ENCODE measurements at regions of chr9 and their contacts with region 1.

Region 1: DNA sequence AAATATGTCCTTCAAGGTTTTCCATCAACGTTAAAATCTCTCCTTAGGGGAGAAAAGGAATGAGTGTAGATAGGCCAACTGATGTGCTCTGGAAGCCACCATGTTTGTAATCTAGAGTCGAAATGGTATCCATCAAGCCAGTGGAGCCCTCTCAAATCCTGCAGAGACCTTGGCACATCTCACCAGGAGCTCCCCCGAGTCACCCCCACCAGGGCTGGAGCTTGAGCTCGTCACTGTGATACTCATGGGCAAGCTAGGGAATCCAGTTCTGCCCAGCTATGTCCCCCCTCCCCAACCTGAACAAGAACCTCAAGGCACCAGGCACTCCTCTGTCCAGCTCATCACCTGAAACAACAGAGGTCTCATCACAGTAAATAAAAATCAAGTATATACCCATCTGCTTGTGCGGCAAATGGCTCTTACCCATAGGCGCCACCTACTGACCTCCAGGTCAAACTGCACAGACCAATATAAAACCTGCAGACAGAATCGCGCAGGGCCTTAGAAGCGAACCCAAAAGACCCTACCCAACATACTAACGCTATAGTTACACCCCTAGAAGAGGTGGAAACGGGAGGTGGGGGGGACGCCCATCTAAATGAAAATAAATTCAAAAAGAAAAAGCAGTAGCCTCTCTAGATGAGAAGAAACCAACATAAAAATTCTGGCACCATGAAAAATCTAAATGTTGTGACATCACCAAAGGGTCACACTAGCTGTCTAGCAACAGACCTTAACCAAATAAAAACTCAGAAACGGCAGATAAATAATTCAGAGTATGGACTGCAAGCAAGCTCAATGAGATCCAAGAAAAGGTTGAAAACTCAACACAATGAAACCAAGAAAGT is 75.0 kb downstream of the TTC39B start:
- DNase-seq: no peak
- H3K4me3 Mint-ChIP-seq: no peak overlapping the region
- H3K27ac Mint-ChIP-seq: peak overlapping the region; percentile 37
- H3K4me1 Mint-ChIP-seq: peaks cover 35% of the 10 kb centered on the region
- H3K27me3 Mint-ChIP-seq: no peaks in the 10 kb centered on the region

Region 2: DNA sequence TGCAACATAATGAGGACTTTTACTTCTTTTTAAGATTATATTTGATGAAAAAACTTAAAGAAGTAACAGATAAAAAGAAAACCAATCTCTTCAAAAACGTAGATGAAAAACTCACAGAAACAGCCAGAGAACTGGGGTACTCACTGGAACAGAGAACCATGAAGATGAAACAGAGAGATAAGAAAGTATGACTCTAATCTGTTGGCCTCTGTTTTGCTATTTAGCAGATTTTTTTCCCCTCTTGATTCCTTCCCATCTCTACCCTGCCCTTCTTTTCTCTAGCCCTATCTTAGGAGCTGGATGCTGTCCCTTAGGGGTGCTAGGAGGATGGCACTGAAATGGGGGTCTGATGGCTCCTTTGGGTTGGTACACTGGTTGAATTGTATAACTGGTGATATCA is 224.3 kb before region 1 on chr9:
- intact Hi-C with region 1: no loop called
- DNase-seq: no peak
- H3K4me3 Mint-ChIP-seq: no peak overlapping the region
- H3K27ac Mint-ChIP-seq: no peak overlapping the region
- H3K4me1 Mint-ChIP-seq: peaks cover 11% of the 10 kb centered on the region
- H3K27me3 Mint-ChIP-seq: peaks cover under 1% of the 10 kb centered on the region

Region 3: DNA sequence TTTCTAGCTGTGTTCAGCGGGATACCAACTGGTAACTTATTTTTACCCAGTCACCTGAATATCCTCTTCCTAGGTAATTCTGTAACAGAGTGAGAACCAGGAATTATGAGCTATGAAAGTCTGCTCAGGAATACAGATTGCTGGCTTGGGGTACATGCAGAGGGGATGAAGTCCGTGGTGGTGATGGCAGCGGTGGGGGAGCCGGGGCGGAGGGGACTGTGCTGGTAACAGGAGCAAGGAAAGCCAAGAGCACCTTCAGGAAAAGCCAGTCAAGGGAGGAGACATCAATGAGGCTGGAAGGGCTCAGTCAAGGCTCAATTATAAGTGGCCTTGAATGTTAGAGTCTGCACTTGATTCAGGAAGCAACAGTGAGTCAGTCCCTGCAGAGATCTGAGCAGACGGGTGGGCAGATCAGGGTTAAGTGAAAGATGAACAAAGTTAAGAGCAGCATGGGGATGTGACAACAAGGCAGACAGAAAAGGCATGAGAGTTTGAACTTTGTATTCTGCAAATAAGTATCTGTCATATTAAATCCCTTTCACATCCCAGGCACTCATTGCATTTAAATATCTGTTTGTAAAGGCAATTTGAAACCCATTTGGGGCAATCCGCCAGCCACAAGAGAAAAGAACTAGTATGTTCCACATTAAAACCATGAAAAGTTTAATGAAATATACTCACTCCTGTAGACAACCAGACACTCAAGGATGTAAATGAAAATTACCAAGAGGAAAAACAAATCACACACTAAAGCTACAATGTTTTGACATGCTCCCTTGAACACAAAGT is 26.2 kb before region 1 on chr9:
- intact Hi-C with region 1: loop called (anchors 1 kb)
- DNase-seq: no peak
- H3K4me3 Mint-ChIP-seq: no peak overlapping the region
- H3K27ac Mint-ChIP-seq: peak overlapping the region; percentile 38
- H3K4me1 Mint-ChIP-seq: peaks cover 31% of the 10 kb centered on the region
- H3K27me3 Mint-ChIP-seq: no peaks in the 10 kb centered on the region

Region 4: DNA sequence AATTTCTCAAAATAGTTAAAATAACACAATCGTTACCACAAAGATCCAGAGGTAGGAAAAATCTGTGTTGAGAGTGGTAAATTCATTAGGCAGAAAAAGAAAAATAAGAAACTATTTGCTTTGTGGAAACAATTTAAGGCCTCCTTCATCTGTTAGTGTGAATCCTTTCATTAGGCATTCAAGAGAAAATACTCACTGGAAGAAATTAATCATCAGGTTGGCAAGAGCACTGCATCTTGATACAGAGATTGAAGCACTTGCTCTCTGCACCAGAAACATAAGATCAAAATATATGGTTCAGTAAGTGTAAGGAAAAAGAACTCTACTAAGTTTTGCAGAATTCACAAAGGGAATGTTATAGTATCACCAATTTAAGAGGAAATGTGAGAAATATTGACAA is 30.6 kb after region 1 on chr9:
- intact Hi-C with region 1: loop called (anchors 5 kb)
- DNase-seq: no peak
- H3K4me3 Mint-ChIP-seq: no peak overlapping the region
- H3K27ac Mint-ChIP-seq: no peak overlapping the region
- H3K4me1 Mint-ChIP-seq: peaks cover 19% of the 10 kb centered on the region
- H3K27me3 Mint-ChIP-seq: no peaks in the 10 kb centered on the region

Region 5: GRCh38 chr9:15306757-15307534 is 74.9 kb after region 1 on chr9 and contains the start of gene TTC39B:
- intact Hi-C with region 1: loop called (anchors 1 kb)
- DNase-seq: peak; percentile 82
- H3K4me3 Mint-ChIP-seq: peak within 1 kb of the TSS; percentile 98
- H3K27ac Mint-ChIP-seq: peak within 1 kb of the TSS; percentile 95
- H3K4me1 Mint-ChIP-seq: peaks cover 57% of the 10 kb centered on the region
- H3K27me3 Mint-ChIP-seq: no peaks in the 10 kb centered on the region
- total RNA-seq, gene TTC39B: 23.8 and 26.1 TPM in 2 replicates

Region 6: GRCh38 chr9:15552636-15553527 is 320.9 kb after region 1 on chr9 and contains the start of gene CCDC171:
- intact Hi-C with region 1: loop called (anchors 1 kb)
- DNase-seq: peak; percentile 84
- H3K4me3 Mint-ChIP-seq: peak within 1 kb of the TSS; percentile 87
- H3K27ac Mint-ChIP-seq: peak within 1 kb of the TSS; percentile 75
- H3K4me1 Mint-ChIP-seq: peaks cover 20% of the 10 kb centered on the region
- H3K27me3 Mint-ChIP-seq: peaks cover 25% of the 10 kb centered on the region
- total RNA-seq, gene CCDC171: 1.4 and 2.0 TPM in 2 replicates

Measured in activated T-helper 1 cell treated with anti-CD3 and anti-CD28 coated beads, Interleukin-12 subunit alpha, Interleukin-12 subunit beta, Interleukin-2, Interleukin-4 antibody, amounts not matched to agents 30 ng/mL and 10 ng/mL and 1 ng/mL, durations not matched to agents 14 hours and 24 hours and 36 hours (primary cell).